ENCODE measurements at regions of chr12 and their contacts with region 1.

Region 1: GRCh38 chr12:15322164-15323061 is at the start of gene PTPRO:
- DNase-seq: peak; percentile 49
- H3K4me3 Mint-ChIP-seq: peak within 1 kb of the TSS; percentile 78
- H3K27ac Mint-ChIP-seq: peak within 1 kb of the TSS; percentile 35
- H3K4me1 Mint-ChIP-seq: peaks cover 13% of the 10 kb centered on the region
- H3K27me3 Mint-ChIP-seq: no peaks in the 10 kb centered on the region
- CTCF ChIP-seq: no peak
- total RNA-seq, gene PTPRO: 0.74 and 2.2 TPM in 2 replicates

Region 2: DNA sequence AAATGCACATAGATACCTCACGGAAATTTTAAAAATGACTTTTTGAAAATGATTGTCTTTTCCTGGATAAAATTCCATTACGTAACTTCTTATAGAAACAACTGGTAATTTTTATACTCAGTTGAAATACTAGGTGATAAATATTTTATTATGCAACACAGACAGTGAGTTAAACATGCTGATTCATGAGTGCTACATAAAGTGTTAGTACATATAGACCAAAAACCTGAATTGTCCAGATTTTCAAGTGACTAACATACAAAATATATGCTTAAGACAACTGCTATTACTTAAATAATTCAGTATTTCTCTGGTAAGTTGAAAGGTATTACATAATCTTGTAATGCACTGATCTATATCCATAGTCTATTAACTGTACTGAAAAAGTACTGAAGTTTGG is 11.8 kb after region 1 on chr12:
- CTCF ChIA-PET with region 1: interaction called, 3 read pairs
- POLR2A ChIA-PET with region 1: interaction called, 13 read pairs
- intact Hi-C with region 1: no loop called
- DNase-seq: peak; percentile 48
- H3K4me3 Mint-ChIP-seq: no peak overlapping the region
- H3K27ac Mint-ChIP-seq: no peak overlapping the region
- H3K4me1 Mint-ChIP-seq: peaks cover 22% of the 10 kb centered on the region
- H3K27me3 Mint-ChIP-seq: no peaks in the 10 kb centered on the region
- CTCF ChIP-seq: no peak

Region 3: DNA sequence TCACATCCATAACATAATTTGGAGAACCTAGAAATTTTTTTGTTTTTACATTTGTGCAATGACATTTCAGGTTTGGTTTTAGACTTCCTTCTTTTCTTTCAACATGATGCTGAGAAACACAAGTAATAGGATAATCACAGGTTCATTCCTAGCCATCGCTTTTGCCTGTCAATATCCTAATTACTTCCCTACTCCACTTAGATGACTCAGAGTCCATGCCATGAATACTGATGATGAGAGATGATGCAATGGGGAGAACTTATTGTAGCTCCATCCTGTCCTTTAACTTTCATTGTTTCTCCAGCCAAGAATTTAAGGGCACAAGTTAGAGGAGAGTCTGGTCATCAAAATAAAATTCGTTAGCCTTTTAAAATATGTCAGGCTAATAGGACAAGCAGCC is 101.2 kb after region 1 on chr12:
- CTCF ChIA-PET with region 1: no interaction called
- POLR2A ChIA-PET with region 1: no interaction called
- intact Hi-C with region 1: no loop called
- DNase-seq: peak; percentile 73
- H3K4me3 Mint-ChIP-seq: no peak overlapping the region
- H3K27ac Mint-ChIP-seq: no peak overlapping the region
- H3K4me1 Mint-ChIP-seq: peaks cover 6% of the 10 kb centered on the region
- H3K27me3 Mint-ChIP-seq: no peaks in the 10 kb centered on the region
- CTCF ChIP-seq: no peak

Region 4: GRCh38 chr12:15446807-15447206 is 124.4 kb after region 1 on chr12:
- CTCF ChIA-PET with region 1: no interaction called
- POLR2A ChIA-PET with region 1: interaction called, 3 read pairs
- intact Hi-C with region 1: loop called (anchors 2 kb)
- DNase-seq: peak; percentile 96
- H3K4me3 Mint-ChIP-seq: peak overlapping the region; percentile 9
- H3K27ac Mint-ChIP-seq: peak overlapping the region; percentile 25
- H3K4me1 Mint-ChIP-seq: peaks cover 16% of the 10 kb centered on the region
- H3K27me3 Mint-ChIP-seq: no peaks in the 10 kb centered on the region
- CTCF ChIP-seq: no peak